Endothelial cell of umbilical vein (primary cell): ENCODE measurements at regions of chr17 and their contacts with region 1.

Region 1: DNA sequence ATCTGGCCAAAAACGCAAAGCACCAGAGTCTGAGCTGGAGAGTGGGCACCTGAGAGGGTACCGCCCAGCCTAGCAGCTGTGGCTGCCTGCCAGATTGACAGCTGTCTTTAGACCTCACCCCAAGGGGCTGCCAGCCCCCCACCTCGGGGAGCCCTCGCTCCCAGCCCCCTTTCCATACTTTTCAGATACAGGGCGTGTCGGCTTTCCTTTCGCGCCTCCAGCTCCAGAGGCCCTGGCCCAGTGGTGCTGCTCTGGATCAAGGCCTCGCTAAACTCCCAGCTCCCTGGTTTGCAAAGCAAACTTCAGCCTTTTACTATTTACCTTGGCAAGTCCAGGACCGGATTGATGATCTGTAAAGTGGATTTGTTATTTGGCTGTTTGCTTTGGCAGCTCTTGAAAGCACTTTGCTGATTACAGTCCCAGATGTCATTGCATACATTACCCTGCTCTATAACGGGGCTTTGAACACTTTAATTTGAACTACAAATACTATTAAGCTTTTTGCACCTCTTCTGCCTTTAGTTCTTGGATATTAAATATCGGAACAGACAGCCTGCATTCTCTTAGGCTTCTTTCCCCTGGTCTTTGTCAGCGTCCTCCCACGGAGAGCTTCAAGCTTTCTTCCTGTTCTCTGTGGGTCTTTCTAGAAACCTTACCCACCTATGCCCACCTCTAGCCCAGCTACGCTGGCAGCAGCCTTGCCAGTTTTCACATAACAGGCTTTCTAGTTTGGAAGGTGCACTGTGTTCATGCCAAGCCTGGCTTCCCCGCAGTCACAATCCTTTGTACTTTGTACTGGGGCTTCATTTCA is 63.6 kb upstream of the TBX2 start:
- DNase-seq: peak; percentile 20
- H3K4me3 ChIP-seq: no peak overlapping the region
- H3K27ac ChIP-seq: no peak overlapping the region
- H3K4me1 ChIP-seq: peaks cover 7% of the 10 kb centered on the region
- H3K27me3 ChIP-seq: peaks cover 4 to 25% of the 10 kb centered on the region in 2 experiments
- CTCF ChIP-seq: no peak
- POLR2A ChIP-seq: no peak

Region 2: GRCh38 chr17:59506894-59507726 is 1828.9 kb before region 1 on chr17:
- CTCF ChIA-PET with region 1: no interaction called
- POLR2A ChIA-PET with region 1: no interaction called
- dilution Hi-C with region 1: no loop called
- intact Hi-C with region 1: no loop called
- DNase-seq: peak; percentile 8
- H3K4me3 ChIP-seq: no peak overlapping the region
- H3K27ac ChIP-seq: no peak overlapping the region
- H3K4me1 ChIP-seq: no peaks in the 10 kb centered on the region
- H3K27me3 ChIP-seq: no peaks in the 10 kb centered on the region
- CTCF ChIP-seq: no peak
- POLR2A ChIP-seq: no peak

Region 3: GRCh38 chr17:61352781-61353491 is 16.9 kb after region 1 on chr17:
- CTCF ChIA-PET with region 1: interaction called, 12 read pairs
- POLR2A ChIA-PET with region 1: no interaction called
- dilution Hi-C with region 1: no loop called
- intact Hi-C with region 1: no loop called
- DNase-seq: no peak
- H3K4me3 ChIP-seq: no peak overlapping the region
- H3K27ac ChIP-seq: no peak overlapping the region
- H3K4me1 ChIP-seq: peaks cover 19% of the 10 kb centered on the region
- H3K27me3 ChIP-seq: peaks cover 0 to 2% of the 10 kb centered on the region in 2 experiments
- CTCF ChIP-seq: no peak
- POLR2A ChIP-seq: no peak